Common myeloid progenitor, CD34-positive (primary cell): ENCODE measurements at regions of chr20 and their contacts with region 1.

Region 1: DNA sequence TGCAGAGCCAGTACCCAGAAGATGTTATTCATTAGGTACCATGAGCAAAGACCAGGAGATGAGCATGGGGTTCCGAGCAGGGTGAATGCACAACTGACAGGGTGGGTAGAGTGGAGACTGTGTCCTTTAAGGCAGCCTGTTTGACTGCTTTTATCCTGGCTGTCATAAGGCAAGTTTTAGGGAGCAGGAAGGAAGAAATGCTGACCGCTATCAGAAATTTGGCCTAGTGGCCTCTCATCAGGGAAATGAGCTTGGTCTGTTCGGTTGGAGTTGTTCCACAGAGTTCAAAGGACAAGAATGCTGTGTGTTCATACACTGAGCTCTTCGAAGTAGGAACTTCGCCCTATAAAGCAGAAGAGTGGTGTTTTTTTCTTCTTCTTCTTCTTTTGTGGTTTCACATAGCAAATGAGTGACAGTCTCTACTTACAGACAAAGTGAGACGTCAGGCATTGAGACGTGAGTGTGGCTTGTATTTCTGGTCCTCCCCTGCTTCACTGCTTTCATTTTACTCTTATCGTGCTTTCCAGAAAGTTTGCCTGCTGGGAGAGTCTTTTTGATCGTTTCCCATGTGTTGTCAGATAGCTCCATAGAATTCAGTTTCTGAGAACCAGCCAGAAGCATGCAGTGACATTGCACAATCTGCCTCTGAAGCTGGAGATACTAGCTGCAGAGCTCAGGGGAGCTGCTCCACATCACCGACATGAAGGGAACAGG is at the start of gene CASS4:
- DNase-seq: peak; percentile 83 to 95 (median 91)
- H3K4me3 ChIP-seq: peak within 1 kb of the TSS in 6 of 7 experiments; percentile 23 to 79 (median 66)
- H3K27ac ChIP-seq: peak within 1 kb of the TSS; percentile 69 to 85
- H3K4me1 ChIP-seq: peaks cover 8 to 69% (median 23%) of the 10 kb centered on the region in 4 experiments
- H3K27me3 ChIP-seq: no peaks in the 10 kb centered on the region

Region 2: GRCh38 chr20:56422076-56422823 is 10.3 kb after region 1 on chr20:
- CTCF ChIA-PET with region 1: interaction called, 15 read pairs
- POLR2A ChIA-PET with region 1: interaction called, 4 read pairs
- DNase-seq: peak; percentile 42 to 64 (median 50)
- H3K4me3 ChIP-seq: peak overlapping the region in 1 of 7 experiments; percentile 5
- H3K27ac ChIP-seq: peak overlapping the region; percentile 22 to 40
- H3K4me1 ChIP-seq: peaks cover 28 to 84% (median 57%) of the 10 kb centered on the region in 4 experiments
- H3K27me3 ChIP-seq: no peaks in the 10 kb centered on the region